ENCODE measurements at regions of chr2 and their contacts with region 1.

Region 1: DNA sequence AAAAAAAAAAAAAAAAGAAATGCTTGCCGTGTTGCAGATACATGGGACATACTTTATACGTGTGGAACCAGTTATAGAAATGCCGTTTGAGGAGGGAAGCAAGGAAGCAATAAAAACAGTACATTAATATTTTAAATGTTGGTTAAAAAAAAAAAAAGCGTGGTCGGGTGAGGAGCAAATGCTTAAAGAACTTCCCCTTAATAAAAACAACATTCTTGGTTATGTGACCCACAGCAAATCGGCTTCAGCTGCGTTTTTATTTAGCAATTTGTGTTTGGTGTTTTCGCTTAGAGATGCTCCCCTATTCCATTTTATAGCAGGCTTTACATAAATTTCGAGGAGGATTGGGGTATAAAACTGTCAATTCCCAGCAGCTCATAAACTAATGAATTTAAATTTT is 223.6 kb downstream of the LRRTM1 start:
- DNase-seq: no peak
- H3K4me3 ChIP-seq: no peak overlapping the region; the same call in 1 of the 2 replicates
- H3K27ac ChIP-seq: no peak overlapping the region
- H3K27me3 ChIP-seq: no peaks in the 10 kb centered on the region
- CTCF ChIP-seq: no peak

Region 2: DNA sequence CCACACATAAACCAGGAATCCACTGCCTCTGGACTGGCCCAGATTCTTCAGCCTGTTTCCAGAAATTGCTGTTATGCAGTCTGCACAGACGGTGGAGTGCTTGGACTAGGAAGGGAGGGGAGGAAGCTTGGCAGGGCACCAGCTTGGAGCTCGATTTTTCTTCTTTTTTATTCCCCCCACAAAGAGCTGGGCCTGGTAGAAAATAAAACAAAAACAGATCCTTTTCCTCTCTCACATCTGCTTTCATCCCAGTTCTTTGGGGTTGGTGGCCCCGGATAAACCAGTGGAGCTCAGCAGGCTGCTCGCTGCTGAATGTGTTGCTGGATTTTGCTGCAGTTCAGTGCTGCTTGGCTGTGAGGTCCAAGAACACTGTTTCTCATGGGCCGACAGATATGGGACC is 207.6 kb after region 1 on chr2:
- CTCF ChIA-PET with region 1: interaction called, 12 read pairs
- POLR2A ChIA-PET with region 1: no interaction called
- DNase-seq: no peak
- H3K4me3 ChIP-seq: no peak overlapping the region
- H3K27ac ChIP-seq: no peak overlapping the region
- H3K27me3 ChIP-seq: no peaks in the 10 kb centered on the region
- CTCF ChIP-seq: peak; percentile 18; the same call in 1 of the 2 replicates